Motor neuron (in vitro differentiated cells): ENCODE measurements at regions of chr2 and their contacts with region 1.

Region 1: DNA sequence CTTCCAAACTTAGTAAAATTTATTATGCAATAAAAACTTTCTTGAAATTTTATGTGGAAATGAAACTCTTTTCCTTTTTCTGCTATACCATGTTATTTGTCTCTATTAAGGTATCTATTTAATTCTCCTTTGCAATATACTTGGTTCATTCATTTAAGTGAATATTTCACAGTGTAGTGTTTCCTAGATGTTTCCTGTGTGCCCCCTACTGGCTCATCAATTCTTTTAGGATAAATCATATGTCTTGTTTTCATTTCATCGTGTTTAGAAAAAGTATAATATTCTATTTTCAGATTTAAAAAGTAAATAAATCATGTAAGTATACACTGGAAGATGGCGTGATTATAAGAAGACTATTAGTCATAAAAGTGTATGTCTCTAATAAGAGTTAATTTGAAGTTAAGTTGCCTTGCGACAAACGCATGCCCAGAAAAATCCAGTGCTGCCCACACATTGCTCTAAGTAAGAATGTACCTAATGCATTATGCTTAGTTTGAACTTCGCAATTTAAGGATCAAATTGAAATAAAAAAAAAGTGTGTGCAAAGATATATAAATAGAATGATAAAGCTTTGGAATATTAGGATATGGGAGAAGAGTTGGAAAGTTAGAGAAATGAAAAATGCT is 525.4 kb downstream of the KCNJ3 start:
- ATAC-seq: peak in 3 of 8 experiments; percentile 37 to 59 (median 44)
- H3K4me3 ChIP-seq: no peak overlapping the region
- H3K27ac ChIP-seq: no peak overlapping the region
- H3K4me1 ChIP-seq: no peaks in the 10 kb centered on the region

Region 2: DNA sequence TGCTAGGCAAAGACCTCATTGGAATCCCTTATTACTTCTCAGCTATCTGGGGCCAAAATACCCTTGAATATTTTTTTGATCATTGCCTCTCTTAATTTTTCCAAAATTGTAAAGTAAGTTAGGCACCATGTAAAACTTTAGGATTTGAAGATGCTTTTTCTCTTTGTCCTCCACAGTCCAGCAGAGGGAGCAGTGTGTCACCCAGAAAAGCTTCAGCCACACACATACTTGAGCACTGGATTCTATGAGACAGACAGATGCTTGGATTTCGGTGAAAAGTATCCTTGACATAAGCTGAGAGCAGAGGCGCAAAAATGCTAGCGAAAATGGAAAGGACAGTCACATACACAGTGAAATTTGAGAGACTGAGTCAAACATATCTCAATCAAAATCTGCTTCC is 600.1 kb before region 1 on chr2:
- in situ Hi-C with region 1: loop called in 5 of 9 experiments (anchors 25 kb)
- ATAC-seq: peak in 7 of 8 experiments; percentile 49 to 72 (median 68)
- H3K4me3 ChIP-seq: no peak overlapping the region
- H3K27ac ChIP-seq: no peak overlapping the region
- H3K4me1 ChIP-seq: no peaks in the 10 kb centered on the region

Region 3: GRCh38 chr2:154637456-154637855 is 586.4 kb before region 1 on chr2:
- in situ Hi-C with region 1: loop called in 2 of 9 experiments (anchors 25 kb)
- ATAC-seq: no peak
- H3K4me3 ChIP-seq: no peak overlapping the region
- H3K27ac ChIP-seq: no peak overlapping the region
- H3K4me1 ChIP-seq: no peaks in the 10 kb centered on the region

Region 4: DNA sequence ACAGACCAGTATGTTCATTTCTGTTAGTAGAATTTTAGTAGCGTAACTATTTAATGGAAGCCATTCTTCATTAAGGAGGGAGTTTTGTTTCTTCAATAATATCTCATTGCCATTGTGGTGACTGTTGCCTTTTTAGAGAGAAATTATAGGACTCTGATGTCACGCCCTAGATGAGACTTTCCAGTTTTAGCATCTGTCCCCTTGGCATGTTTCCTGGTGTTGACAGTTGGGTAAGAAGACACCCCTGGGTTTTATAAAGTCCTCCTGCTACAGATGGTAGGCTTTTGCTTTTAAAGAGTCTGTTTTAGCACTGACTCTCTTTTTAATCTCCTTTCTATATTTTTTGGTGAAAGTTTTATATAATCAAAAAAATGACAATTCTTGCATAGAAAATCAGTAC is 483.5 kb before region 1 on chr2:
- in situ Hi-C with region 1: no loop called
- ATAC-seq: no peak
- H3K4me3 ChIP-seq: no peak overlapping the region
- H3K27ac ChIP-seq: no peak overlapping the region
- H3K4me1 ChIP-seq: no peaks in the 10 kb centered on the region

Region 5: GRCh38 chr2:155368934-155369333 is 145.0 kb after region 1 on chr2:
- in situ Hi-C with region 1: no loop called
- ATAC-seq: peak in 4 of 8 experiments; percentile 19 to 52 (median 50)
- H3K4me3 ChIP-seq: no peak overlapping the region
- H3K27ac ChIP-seq: no peak overlapping the region
- H3K4me1 ChIP-seq: no peaks in the 10 kb centered on the region